Dorsolateral prefrontal cortex (tissue), 120 donors: ENCODE measurements at regions of chr18 and their contacts with region 1.

Region 1: DNA sequence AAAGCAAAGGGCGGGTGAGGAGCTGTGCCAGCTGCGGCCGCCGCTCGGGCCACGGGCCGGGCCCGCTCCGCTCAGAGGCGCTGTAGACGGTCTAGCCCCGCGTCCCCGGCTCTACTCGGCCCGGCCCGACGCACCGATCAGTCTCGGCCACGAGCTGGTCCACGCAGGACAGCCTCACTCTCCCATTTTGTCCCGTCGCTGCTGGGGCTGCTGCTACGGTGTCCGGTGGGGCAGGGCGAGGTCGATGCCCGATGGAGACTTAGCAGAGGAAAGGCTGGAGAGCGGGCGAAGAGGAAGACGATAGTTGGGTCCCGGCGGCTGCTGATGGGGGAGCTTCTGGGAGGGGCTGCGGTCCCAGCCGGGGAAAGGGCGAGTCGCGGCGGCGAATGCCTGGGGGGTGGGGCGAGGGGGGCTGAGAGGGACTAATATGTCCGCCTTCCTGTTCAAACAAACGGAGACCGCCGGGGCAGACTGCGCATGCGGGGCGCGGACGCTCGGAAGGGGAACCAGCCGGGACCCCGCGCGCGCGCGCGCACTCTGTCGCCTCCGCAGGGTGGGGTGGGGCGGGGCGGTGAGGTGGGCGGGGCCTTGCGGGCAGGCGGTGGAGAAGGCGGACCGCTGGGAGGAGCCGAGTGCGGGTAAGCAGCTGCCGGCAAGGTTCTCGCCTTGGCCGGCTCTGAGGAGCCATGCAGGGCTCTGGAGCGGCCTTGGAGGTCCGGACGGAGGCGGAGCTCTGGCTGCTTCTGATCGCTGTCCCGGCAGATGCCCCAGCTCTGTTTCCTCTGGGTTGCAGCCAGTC is at the start of gene ROCK1:
- DNase-seq: peak; percentile 91 to 96 (median 94)
- H3K4me3 ChIP-seq: peak within 1 kb of the TSS; percentile 60 to 100 (median 96)
- H3K27ac ChIP-seq: peak within 1 kb of the TSS; percentile 61 to 98 (median 94)
- H3K27me3 ChIP-seq: no peaks in the 10 kb centered on the region
- CTCF ChIP-seq: peak in 22 of 56 donors; percentile 6 to 38 (median 26)
- total RNA-seq, gene ROCK1: 22.3 to 53.5 (median 37.7) TPM

Region 2: GRCh38 chr18:21004726-21005125 is 106.8 kb before region 1 on chr18:
- intact Hi-C with region 1: loop called in 1 of 2 experiments (anchors 10 kb)
- DNase-seq: no peak
- H3K4me3 ChIP-seq: no peak overlapping the region
- H3K27ac ChIP-seq: peak overlapping the region in 30 of 59 donors; percentile 0 to 70 (median 39)
- H3K27me3 ChIP-seq: no peaks in the 10 kb centered on the region
- CTCF ChIP-seq: no peak

Region 3: GRCh38 chr18:21053127-21053526 is 58.4 kb before region 1 on chr18:
- intact Hi-C with region 1: loop called in 1 of 2 experiments (anchors 5 kb)
- DNase-seq: peak in 1 of 10 donors; percentile 35
- H3K4me3 ChIP-seq: no peak overlapping the region
- H3K27ac ChIP-seq: peak overlapping the region in 52 of 59 donors; percentile 4 to 91 (median 72)
- H3K27me3 ChIP-seq: no peaks in the 10 kb centered on the region
- CTCF ChIP-seq: no peak

Region 4: GRCh38 chr18:21191596-21192307 is 80.2 kb after region 1 on chr18:
- intact Hi-C with region 1: loop called (anchors 5 kb)
- DNase-seq: peak; percentile 10 to 85 (median 68)
- H3K4me3 ChIP-seq: peak overlapping the region in 12 of 59 donors; percentile 1 to 40 (median 22)
- H3K27ac ChIP-seq: peak overlapping the region in 56 of 59 donors; percentile 25 to 94 (median 82)
- H3K27me3 ChIP-seq: no peaks in the 10 kb centered on the region
- CTCF ChIP-seq: peak in 55 of 56 donors; percentile 21 to 79 (median 62)

Region 5: DNA sequence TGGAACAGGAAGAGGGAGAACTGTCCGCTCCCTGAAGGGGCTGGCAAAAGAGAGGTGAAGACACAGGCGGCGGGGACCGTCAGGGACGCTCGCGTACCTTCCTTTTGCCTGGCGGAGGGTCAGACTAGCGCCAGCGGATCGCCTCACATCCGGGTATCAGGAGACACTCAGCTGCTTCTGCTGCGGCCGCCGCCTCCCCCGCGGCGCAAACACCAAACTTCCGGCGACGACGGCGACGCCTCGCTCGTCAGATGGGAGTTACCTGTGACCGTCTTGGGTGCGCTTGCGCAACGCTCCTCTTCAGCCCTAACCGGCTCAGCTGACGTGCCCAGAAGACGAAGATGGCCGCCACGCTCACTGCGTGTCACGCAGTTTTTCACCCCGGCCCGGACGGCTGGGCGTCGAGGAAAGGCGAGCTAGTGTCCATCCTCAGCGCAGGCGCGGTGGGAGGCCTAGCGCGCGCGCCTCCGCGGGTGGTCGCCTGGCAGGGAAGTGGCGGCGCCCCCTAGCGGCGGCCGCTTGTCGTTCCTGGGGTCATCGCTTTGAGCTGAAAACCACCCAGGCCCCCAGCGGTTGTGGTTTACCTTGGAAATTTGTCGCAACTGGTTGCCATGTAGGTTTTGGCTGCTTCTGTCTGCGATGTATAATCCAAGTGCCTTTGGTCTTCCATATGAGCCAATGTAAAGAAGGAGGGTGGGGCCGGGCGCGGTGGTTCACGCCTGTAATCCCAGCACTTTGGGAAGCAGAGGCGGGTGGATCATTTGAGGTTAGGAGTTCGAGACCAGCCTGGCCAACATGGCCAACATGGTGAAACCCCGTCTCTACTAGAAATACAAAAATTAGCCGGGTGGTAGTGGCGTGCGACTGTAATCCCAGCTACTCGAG is 489.2 kb after region 1 on chr18 and contains the start of gene ESCO1:
- intact Hi-C with region 1: loop called in 1 of 2 experiments (anchors 10 kb)
- DNase-seq: peak; percentile 81 to 96 (median 91)
- H3K4me3 ChIP-seq: peak within 1 kb of the TSS; percentile 63 to 100 (median 96)
- H3K27ac ChIP-seq: peak within 1 kb of the TSS; percentile 25 to 99 (median 93)
- H3K27me3 ChIP-seq: no peaks in the 10 kb centered on the region
- CTCF ChIP-seq: peak; percentile 85 to 99 (median 96)
- total RNA-seq, gene ESCO1: 13.0 to 29.8 (median 18.0) TPM